Transverse colon (tissue), 4 donors: ENCODE measurements at regions of chr12 and their contacts with region 1.

Region 1: GRCh38 chr12:1939801-1940607 is 21.6 kb upstream of the CACNA2D4 start:
- DNase-seq: peak; percentile 91
- H3K4me3 ChIP-seq: peak overlapping the region in 1 of 4 donors; percentile 24
- H3K27ac ChIP-seq: peak overlapping the region; percentile 83 to 91 (median 88)
- H3K4me1 ChIP-seq: peaks cover 24 to 54% (median 44%) of the 10 kb centered on the region in 4 donors
- H3K27me3 ChIP-seq: no peaks in the 10 kb centered on the region
- CTCF ChIP-seq: peak; percentile 93 to 98 (median 96)
- EP300 ChIP-seq: no peak
- POLR2A ChIP-seq: no peak

Region 2: GRCh38 chr12:1650260-1650977 is 289.6 kb before region 1 on chr12:
- in situ Hi-C with region 1: loop called in 3 of 4 experiments (anchors 5 to 10 kb)
- intact Hi-C with region 1: no loop called
- DNase-seq: no peak
- H3K4me3 ChIP-seq: no peak overlapping the region
- H3K27ac ChIP-seq: peak overlapping the region; percentile 21 to 54 (median 44)
- H3K4me1 ChIP-seq: peaks cover 0 to 17% (median 0%) of the 10 kb centered on the region in 4 donors
- H3K27me3 ChIP-seq: no peaks in the 10 kb centered on the region
- CTCF ChIP-seq: no peak
- EP300 ChIP-seq: no peak
- POLR2A ChIP-seq: no peak

Region 3: DNA sequence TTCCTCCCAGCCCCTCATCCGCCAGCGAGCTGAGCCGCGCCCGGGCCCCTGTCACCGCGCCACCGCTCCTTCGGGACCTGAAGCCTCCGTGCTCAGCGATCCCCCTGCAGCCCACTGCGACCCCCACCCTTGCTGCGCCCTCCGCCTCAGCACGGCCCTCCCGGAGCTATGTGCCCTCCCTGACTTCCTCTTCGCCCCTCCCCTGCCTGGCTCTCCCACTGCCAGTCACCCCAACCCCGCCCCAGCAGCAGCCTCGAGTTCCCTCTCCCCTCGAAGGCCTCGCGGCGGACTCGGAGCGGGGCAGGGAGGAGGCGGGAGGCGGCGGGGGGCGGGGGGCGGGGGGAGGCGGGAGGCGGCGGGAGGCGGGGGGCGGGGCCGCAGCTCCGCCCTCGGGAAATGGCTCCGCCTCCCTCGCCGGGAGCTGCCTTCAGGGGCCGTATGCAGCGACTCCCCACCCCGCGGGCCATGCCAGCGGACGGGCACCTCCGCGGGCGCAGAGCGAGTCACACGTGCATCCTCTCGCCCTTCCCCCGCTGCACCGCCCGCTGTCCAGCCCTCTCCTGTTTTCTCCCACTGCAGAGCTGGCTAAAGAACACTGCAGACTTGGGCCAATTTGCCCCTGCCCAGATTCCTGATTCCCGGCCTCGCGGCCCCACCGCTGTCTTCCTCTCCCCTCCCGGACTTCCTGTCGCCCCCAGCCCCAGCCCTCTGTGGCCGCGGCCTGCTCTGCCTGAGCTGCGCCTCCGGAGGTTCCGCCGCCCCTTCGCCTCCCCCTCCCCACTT is 278.3 kb before region 1 on chr12:
- in situ Hi-C with region 1: loop called in 3 of 4 experiments (anchors 10 kb)
- intact Hi-C with region 1: loop called (anchors 2 kb)
- DNase-seq: peak; percentile 95
- H3K4me3 ChIP-seq: peak overlapping the region; percentile 14 to 50 (median 41)
- H3K27ac ChIP-seq: peak overlapping the region; percentile 82 to 96 (median 90)
- H3K4me1 ChIP-seq: peaks cover 12 to 49% (median 20%) of the 10 kb centered on the region in 4 donors
- H3K27me3 ChIP-seq: no peaks in the 10 kb centered on the region
- CTCF ChIP-seq: no peak
- EP300 ChIP-seq: no peak
- POLR2A ChIP-seq: peak; percentile 49

Region 4: DNA sequence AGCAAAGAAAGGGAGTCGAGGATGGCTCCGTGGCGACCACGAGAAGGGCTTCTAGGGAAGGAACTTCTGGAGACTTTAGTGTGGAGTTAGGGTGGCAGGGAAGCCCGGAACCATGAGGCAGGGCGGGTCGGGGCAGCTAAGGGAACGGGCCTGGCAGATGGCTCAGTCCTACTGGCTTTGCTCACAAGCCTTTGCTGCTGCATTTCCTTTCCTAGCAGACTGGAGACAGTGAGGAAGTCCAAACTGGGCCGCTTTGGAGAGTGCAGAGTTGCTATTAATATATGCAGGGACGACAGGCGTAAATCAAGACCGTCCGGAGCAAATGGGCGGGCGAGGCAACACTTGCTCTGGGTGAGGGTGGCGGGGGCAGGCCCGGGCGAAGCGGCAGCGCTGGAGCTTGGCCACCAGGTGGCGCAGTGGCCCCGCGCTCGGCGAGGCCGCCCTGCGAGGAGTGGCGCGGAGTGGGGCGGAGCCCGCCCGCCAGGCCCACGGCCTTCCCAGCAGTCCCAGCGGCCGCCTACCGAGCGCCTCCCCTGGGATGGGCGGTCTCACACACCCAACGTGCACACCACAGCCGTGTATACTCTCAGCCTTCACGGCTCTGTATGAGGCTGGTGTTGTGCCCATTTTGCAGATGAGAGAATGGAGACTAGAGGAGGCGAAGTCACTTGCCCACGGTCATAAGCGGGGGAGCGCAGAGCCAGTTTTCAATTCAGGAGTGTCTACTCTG is 144.1 kb before region 1 on chr12:
- in situ Hi-C with region 1: loop called in 3 of 4 experiments (anchors 10 kb)
- intact Hi-C with region 1: loop called (anchors 1 kb)
- DNase-seq: peak; percentile 96
- H3K4me3 ChIP-seq: peak overlapping the region; percentile 55 to 72 (median 62)
- H3K27ac ChIP-seq: peak overlapping the region; percentile 87 to 90 (median 88)
- H3K4me1 ChIP-seq: peaks cover 10 to 25% (median 16%) of the 10 kb centered on the region in 4 donors
- H3K27me3 ChIP-seq: no peaks in the 10 kb centered on the region
- CTCF ChIP-seq: peak; percentile 72 to 99 (median 95)
- EP300 ChIP-seq: no peak
- POLR2A ChIP-seq: peak; percentile 82

Region 5: GRCh38 chr12:1804545-1805332 is 135.3 kb before region 1 on chr12:
- in situ Hi-C with region 1: loop called (anchors 5 to 10 kb)
- intact Hi-C with region 1: no loop called
- DNase-seq: peak; percentile 90
- H3K4me3 ChIP-seq: no peak overlapping the region
- H3K27ac ChIP-seq: peak overlapping the region in 1 of 4 donors; percentile 21
- H3K4me1 ChIP-seq: peaks cover 0 to 4% (median 0%) of the 10 kb centered on the region in 4 donors
- H3K27me3 ChIP-seq: no peaks in the 10 kb centered on the region
- CTCF ChIP-seq: no peak
- EP300 ChIP-seq: no peak
- POLR2A ChIP-seq: no peak

Region 6: DNA sequence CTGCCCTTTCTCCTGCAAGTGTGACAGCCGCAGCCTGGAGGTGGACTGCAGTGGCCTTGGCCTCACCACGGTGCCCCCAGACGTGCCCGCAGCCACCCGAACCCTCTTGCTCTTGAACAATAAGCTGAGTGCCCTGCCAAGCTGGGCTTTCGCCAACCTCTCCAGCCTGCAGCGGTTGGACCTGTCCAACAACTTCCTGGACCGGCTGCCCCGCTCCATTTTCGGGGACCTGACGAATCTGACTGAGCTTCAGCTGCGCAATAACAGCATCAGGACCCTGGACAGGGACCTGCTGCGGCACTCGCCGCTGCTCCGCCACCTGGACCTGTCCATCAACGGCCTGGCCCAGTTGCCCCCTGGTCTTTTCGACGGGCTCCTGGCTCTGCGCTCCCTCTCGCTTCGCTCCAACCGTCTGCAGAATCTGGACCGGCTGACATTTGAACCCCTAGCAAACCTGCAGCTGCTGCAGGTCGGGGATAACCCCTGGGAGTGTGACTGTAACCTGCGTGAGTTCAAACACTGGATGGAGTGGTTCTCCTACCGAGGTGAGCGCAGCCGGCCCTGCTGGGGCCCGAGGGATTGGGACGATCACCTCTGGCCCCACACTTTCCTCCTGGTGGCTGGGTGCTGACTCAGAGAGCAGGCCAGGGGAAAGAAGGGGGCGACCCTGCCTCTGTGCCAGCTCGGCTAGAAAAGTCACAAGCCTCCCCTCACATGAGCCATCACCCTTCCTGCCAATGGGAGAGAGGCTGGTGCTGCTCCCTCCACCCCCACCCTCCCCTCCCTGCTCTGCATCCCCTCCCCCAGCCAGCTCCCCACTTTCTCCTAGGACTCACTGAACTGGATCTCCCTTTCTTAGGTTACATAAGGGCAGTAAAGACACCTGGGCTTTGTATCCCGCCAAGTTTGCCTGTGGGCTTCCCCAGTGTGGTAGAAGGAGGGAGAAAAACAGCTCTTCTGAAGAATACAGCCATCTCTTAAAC is 108.7 kb before region 1 on chr12:
- in situ Hi-C with region 1: no loop called
- intact Hi-C with region 1: no loop called
- DNase-seq: peak; percentile 43
- H3K4me3 ChIP-seq: no peak overlapping the region
- H3K27ac ChIP-seq: no peak overlapping the region
- H3K4me1 ChIP-seq: no peaks in the 10 kb centered on the region
- H3K27me3 ChIP-seq: peaks cover 37% of the 10 kb centered on the region
- CTCF ChIP-seq: no peak
- EP300 ChIP-seq: no peak
- POLR2A ChIP-seq: no peak

Region 7: GRCh38 chr12:2034633-2035430 is 94.8 kb after region 1 on chr12:
- in situ Hi-C with region 1: loop called in 1 of 4 experiments (anchors 10 kb)
- intact Hi-C with region 1: no loop called
- DNase-seq: peak; percentile 93
- H3K4me3 ChIP-seq: peak overlapping the region in 2 of 4 donors; percentile 16 to 38
- H3K27ac ChIP-seq: peak overlapping the region; percentile 18 to 78 (median 44)
- H3K4me1 ChIP-seq: peaks cover 0 to 13% (median 8%) of the 10 kb centered on the region in 4 donors
- H3K27me3 ChIP-seq: peaks cover 8% of the 10 kb centered on the region
- CTCF ChIP-seq: peak; percentile 63 to 96 (median 92)
- EP300 ChIP-seq: no peak
- POLR2A ChIP-seq: no peak

Region 8: DNA sequence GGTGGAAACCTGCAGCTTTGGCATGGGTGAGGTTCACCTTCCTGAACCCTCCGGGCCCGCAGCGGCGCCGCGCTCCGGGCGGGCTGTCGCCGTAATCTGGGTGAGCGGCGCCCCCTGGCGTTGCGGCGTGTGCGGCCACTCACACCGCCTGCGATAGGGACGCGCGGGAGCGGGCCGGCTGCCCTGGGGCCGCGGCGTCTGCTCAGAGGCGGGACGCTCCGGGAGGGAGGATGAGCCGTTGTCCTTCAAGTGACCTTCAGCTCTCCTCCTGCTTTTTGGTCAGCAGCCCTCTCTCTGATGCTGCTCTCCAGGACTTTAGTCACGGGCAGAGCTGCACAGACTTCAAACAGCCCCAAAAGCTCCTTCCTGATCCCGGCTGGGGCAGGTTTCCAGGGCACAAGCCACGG is 643.1 kb after region 1 on chr12:
- in situ Hi-C with region 1: no loop called
- intact Hi-C with region 1: loop called (anchors 10 kb)
- DNase-seq: peak; percentile 70
- H3K4me3 ChIP-seq: peak overlapping the region in 1 of 4 donors; percentile 14
- H3K27ac ChIP-seq: peak overlapping the region in 3 of 4 donors; percentile 15 to 56 (median 47)
- H3K4me1 ChIP-seq: peaks cover 5 to 31% (median 19%) of the 10 kb centered on the region in 4 donors
- H3K27me3 ChIP-seq: no peaks in the 10 kb centered on the region
- CTCF ChIP-seq: peak; percentile 74 to 92 (median 91)
- EP300 ChIP-seq: no peak
- POLR2A ChIP-seq: no peak